Naive thymus-derived CD4-positive, alpha-beta T cell (primary cell): ENCODE measurements at regions of chr7 and their contacts with region 1.

Region 1: GRCh38 chr7:29084832-29085231 is 61.5 kb downstream of the CPVL start:
- DNase-seq: no peak
- ATAC-seq: peak; percentile 57
- H3K4me3 ChIP-seq: no peak overlapping the region
- H3K4me3 Mint-ChIP-seq: no peak overlapping the region
- H3K27ac ChIP-seq: no peak overlapping the region
- H3K27ac Mint-ChIP-seq: no peak overlapping the region
- H3K4me1 ChIP-seq: no peaks in the 10 kb centered on the region
- H3K4me1 Mint-ChIP-seq: no peaks in the 10 kb centered on the region
- H3K27me3 ChIP-seq: no peaks in the 10 kb centered on the region
- H3K27me3 Mint-ChIP-seq: peaks cover 2 to 27% (median 7%) of the 10 kb centered on the region in 5 donors

Region 2: DNA sequence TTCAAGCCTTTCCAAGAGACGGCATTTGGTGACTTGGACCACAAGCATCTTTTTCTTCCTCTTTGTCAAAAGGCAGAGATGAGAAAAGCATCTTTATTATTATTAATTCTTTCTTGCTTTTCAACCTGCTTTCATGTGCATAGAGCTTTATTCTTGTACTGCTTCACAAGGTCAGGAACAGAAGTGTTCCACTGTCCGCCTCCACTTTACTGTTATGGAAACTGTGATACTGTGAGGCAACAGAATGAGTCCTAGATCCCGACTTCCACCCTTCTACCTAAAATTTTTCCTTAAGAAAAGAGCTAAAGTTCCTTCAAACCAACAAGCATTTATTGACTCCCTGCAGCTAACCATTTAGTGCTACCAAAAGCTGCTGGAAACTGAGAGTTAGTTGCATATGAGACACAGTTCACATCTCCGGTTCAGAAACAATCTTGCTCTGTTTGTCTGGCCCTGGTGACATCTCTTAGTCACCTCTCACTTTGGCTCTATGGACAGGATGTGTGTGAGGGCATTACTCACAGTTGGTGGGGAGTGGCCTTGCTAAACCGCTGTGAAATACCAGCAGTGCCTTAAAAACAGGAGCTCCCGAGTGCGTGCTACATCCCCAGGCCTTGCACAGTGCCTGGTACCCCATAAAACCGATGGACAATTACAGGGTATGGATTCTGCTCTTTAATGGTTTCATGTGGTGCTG is 49.6 kb before region 1 on chr7:
- CTCF ChIA-PET with region 1: no interaction called
- POLR2A ChIA-PET with region 1: no interaction called
- intact Hi-C with region 1: loop called in 1 of 2 experiments (anchors 2 kb)
- DNase-seq: peak in 1 of 9 donors; percentile 26
- ATAC-seq: peak; percentile 41
- H3K4me3 ChIP-seq: no peak overlapping the region
- H3K4me3 Mint-ChIP-seq: peak overlapping the region in 1 of 10 donors; percentile 10
- H3K27ac ChIP-seq: no peak overlapping the region
- H3K27ac Mint-ChIP-seq: peak overlapping the region in 1 of 9 donors; percentile 68
- H3K4me1 ChIP-seq: no peaks in the 10 kb centered on the region
- H3K4me1 Mint-ChIP-seq: peaks cover 0 to 19% (median 0%) of the 10 kb centered on the region in 7 donors
- H3K27me3 ChIP-seq: no peaks in the 10 kb centered on the region
- H3K27me3 Mint-ChIP-seq: peaks cover 0 to 4% (median 0%) of the 10 kb centered on the region in 5 donors

Region 3: DNA sequence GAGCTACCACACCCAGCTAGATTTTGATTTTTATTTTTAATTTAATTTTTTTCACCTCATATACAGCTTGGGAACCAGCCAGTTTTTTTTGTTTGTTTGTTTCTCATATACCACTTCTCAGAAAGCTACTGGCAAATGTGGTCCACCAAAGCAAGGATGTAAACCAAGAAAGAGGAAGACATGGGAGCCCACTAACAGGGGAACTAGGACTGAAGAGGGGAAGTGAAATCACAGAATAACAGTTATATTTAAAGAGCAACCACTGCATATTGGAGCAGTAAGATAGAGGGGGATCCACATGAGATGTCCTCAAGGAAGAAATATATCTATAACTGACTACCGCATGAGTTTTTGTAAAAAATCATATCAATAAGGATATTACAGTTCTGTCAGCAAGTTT is 51.0 kb after region 1 on chr7:
- CTCF ChIA-PET with region 1: no interaction called
- POLR2A ChIA-PET with region 1: no interaction called
- intact Hi-C with region 1: no loop called
- DNase-seq: no peak
- ATAC-seq: peak; percentile 54
- H3K4me3 ChIP-seq: no peak overlapping the region
- H3K4me3 Mint-ChIP-seq: no peak overlapping the region
- H3K27ac ChIP-seq: no peak overlapping the region
- H3K27ac Mint-ChIP-seq: no peak overlapping the region
- H3K4me1 ChIP-seq: no peaks in the 10 kb centered on the region
- H3K4me1 Mint-ChIP-seq: peaks cover 0 to 2% (median 0%) of the 10 kb centered on the region in 7 donors
- H3K27me3 ChIP-seq: peaks cover 0 to 4% of the 10 kb centered on the region in 2 donors
- H3K27me3 Mint-ChIP-seq: peaks cover 4 to 37% (median 15%) of the 10 kb centered on the region in 5 donors